ENCODE measurements at regions of chr4 and their contacts with region 1.

Region 1: DNA sequence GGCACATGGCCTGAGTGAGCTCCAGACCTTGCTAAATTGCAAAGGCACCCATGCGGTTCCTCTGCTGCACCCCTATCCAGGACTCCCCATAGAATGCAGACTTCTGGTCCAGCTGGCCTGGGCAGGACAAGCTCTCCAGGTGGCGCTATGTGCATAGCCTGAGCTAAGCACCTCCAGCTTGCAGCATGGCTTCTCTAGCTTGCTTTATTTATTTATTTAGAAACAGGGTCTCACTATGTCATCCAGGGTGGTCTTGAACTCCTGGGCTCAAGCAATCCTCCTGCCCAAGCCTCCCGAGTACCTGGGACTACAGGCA is 5.5 kb upstream of the WFS1 start:
- H3K4me3 ChIP-seq: no peak overlapping the region
- H3K27ac ChIP-seq: no peak overlapping the region
- H3K4me1 ChIP-seq: no peaks in the 10 kb centered on the region
- CTCF ChIP-seq: 0 out of 2 replicates have a peak, but pooled peaks have one; percentile 20

Region 2: GRCh38 chr4:6250235-6250983 is 13.8 kb before region 1 on chr4:
- CTCF ChIA-PET with region 1: interaction called, 38 read pairs
- POLR2A ChIA-PET with region 1: no interaction called
- H3K4me3 ChIP-seq: no peak overlapping the region
- H3K27ac ChIP-seq: no peak overlapping the region
- H3K4me1 ChIP-seq: no peaks in the 10 kb centered on the region
- CTCF ChIP-seq: peak; percentile 24; the same call in 1 of the 2 replicates

Measured in HEK293 (cell line).